Right ventricle myocardium inferior (tissue), 1 donor: ENCODE measurements at regions of chr14 and their contacts with region 1.

Region 1: GRCh38 chr14:88551094-88551870 is 3.5 kb downstream of the PTPN21 start:
- DNase-seq: peak; percentile 88
- ATAC-seq: peak; percentile 81

Region 2: DNA sequence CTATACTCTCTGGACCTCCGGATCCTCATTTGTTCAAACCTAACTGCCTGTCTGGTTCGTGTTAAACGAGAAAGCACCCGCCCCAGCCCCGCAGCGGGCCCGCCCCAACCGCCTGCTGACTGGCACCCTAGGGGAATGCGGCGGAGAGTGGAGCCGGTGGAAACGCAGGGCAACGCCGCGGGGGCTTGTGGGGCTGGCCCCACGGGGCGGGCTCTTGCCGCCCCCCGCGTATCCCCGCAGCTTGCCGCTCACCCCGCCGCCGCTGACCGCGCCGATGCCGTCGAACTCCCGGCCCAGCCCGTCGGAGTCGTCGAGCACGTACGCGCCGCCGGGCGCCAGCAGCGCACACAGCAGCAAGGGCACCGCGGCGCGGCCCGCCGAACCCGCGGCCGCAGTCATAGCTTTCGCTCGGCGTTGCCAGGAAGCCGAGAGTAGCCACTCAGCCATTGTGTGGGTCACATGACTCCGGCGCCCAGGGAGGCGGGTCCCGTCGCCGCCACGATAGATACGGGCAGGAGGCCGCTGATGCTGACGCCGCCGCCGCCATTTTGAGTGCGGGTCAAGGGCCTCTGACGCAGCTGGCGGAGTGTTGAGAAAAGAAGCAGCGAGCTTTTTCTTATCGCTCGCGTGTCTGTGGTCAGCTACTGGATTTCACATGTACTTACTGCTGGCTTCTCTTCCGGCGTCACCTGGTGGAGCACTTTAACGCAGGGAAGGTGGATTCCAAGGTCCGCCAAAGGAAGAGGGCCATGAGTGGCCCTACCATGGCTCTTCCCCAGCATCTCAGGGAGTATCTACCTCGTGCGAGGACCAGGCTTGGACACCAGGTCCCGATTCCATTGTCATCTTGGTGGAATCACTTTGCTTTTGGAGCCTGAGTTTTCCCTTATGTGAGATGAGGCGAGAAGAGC is 558.3 kb before region 1 on chr14 and contains the start of gene GALC:
- intact Hi-C with region 1: loop called (anchors 5 kb)
- DNase-seq: peak; percentile 99
- ATAC-seq: peak; percentile 96
- total RNA-seq, gene GALC: 11.1 TPM

Region 3: DNA sequence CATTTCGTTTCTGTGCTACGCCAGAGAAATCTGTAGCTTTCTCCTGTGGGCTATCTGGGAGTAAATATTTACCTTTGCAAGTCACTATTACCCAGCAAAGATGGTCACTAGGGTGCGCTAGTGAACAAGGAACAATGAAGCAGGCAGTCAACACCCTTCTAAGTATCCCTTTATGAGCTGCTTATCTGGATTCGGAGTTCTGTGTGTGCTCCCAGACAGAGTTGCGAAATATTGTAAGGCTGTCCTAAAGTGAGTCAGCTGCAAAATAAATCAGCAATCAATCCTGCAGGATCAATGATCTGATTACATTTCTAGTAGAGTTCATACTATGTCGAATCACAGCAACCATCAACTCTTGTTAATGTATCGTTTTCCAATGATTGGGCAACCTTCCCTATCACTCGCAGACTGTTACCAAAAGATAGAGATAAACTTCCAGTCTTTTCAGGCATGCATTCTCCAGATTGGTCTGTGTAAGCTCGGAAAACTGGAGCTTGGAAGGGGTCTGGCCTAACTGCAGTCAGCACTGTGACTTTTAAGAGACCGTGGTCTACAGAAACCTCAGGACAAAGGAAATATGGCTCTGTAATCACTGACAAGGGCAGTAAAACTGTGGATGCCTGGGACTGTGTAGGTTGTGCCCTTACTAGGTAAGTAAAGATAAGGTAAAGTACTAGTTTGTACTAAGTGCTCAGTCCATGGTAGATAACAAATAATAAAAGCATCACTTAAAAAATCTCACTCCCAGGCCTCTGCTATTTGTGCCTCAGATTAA is 361.7 kb before region 1 on chr14:
- intact Hi-C with region 1: loop called (anchors 5 kb)
- DNase-seq: no peak
- ATAC-seq: peak; percentile 93